ENCODE measurements at regions of chr3 and their contacts with region 1.

Region 1: GRCh38 chr3:78846718-78847117 is 921.1 kb downstream of the ROBO1 start:
- DNase-seq: no peak
- ATAC-seq: no peak
- H3K4me3 ChIP-seq: no peak overlapping the region
- H3K27ac ChIP-seq: peak overlapping the region; percentile 90
- H3K4me1 ChIP-seq: peaks cover 85% of the 10 kb centered on the region
- H3K27me3 ChIP-seq: no peaks in the 10 kb centered on the region
- CTCF ChIP-seq: no peak
- EP300 ChIP-seq: no peak; a peak in 1 of 4 replicates
- POLR2A ChIP-seq: no peak
- RAD21 ChIP-seq: no peak

Region 2: GRCh38 chr3:78562328-78562727 is 284.4 kb before region 1 on chr3:
- CTCF ChIA-PET with region 1: no interaction called
- POLR2A ChIA-PET with region 1: no interaction called
- in situ Hi-C with region 1: no loop called
- intact Hi-C with region 1: no loop called
- DNase-seq: no peak
- ATAC-seq: no peak
- H3K4me3 ChIP-seq: no peak overlapping the region
- H3K27ac ChIP-seq: no peak overlapping the region
- H3K4me1 ChIP-seq: no peaks in the 10 kb centered on the region
- H3K27me3 ChIP-seq: no peaks in the 10 kb centered on the region
- CTCF ChIP-seq: no peak
- EP300 ChIP-seq: no peak
- POLR2A ChIP-seq: no peak
- RAD21 ChIP-seq: no peak

Region 3: DNA sequence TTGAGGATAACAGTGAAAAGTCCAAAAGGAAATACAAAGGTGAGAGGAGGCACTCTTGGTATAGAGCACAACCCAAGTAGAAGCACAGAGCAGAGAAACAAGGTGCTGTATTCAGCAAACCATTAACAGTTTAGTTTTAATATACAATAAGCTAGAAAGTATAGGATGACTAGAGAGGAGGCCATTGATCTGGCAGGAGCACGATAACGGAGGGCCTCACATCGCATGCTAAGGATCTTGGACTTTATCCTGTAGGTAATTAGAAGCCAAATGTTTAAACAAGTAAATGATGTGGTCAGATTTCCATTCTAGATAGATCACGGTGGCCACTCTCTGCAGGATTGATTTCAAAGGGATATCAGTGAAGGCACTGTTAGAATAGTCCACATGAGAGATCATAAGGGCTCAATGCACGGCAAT is 13.9 kb before region 1 on chr3:
- CTCF ChIA-PET with region 1: no interaction called
- POLR2A ChIA-PET with region 1: interaction called, 8 read pairs
- in situ Hi-C with region 1: no loop called
- intact Hi-C with region 1: loop called (anchors 2 kb)
- DNase-seq: peak; percentile 96
- ATAC-seq: peak; percentile 99
- H3K4me3 ChIP-seq: peak overlapping the region in 1 of 3 experiments; percentile 33; a peak in 2 of 6 replicates
- H3K27ac ChIP-seq: peak overlapping the region; percentile 95
- H3K4me1 ChIP-seq: peaks cover 54% of the 10 kb centered on the region
- H3K27me3 ChIP-seq: no peaks in the 10 kb centered on the region
- CTCF ChIP-seq: no peak
- EP300 ChIP-seq: peak; percentile 69 to 93
- POLR2A ChIP-seq: peak; percentile 27 to 34; a peak in 1 of 4 replicates
- RAD21 ChIP-seq: no peak; the same call in 1 of the 2 replicates

Region 4: GRCh38 chr3:78879295-78879860 is 32.7 kb after region 1 on chr3:
- CTCF ChIA-PET with region 1: no interaction called
- POLR2A ChIA-PET with region 1: no interaction called
- in situ Hi-C with region 1: no loop called
- intact Hi-C with region 1: loop called (anchors 2 kb)
- DNase-seq: no peak
- ATAC-seq: peak; percentile 35
- H3K4me3 ChIP-seq: no peak overlapping the region
- H3K27ac ChIP-seq: peak overlapping the region; percentile 50
- H3K4me1 ChIP-seq: peaks cover 63% of the 10 kb centered on the region
- H3K27me3 ChIP-seq: no peaks in the 10 kb centered on the region
- CTCF ChIP-seq: no peak
- EP300 ChIP-seq: no peak
- POLR2A ChIP-seq: no peak
- RAD21 ChIP-seq: no peak

Region 5: DNA sequence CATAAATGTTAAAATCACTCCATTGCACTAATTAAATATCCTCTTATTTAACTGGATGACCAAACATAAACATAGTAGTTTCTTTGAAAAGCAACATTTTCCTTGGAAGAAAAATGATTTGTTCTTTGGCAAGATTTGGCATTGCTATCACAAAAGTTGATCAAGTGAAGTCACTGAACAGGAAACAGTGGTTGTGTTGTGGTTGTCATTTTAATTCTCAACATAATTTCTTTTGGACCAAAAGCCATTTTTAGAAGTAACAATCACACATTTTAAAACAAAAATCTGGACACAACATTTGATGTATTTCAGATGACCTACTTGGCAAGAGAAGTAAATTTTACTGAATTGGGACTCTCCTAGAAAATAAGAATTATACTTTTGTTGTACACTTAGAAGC is 48.8 kb after region 1 on chr3:
- CTCF ChIA-PET with region 1: no interaction called
- POLR2A ChIA-PET with region 1: no interaction called
- in situ Hi-C with region 1: no loop called
- intact Hi-C with region 1: no loop called
- DNase-seq: no peak
- ATAC-seq: no peak
- H3K4me3 ChIP-seq: no peak overlapping the region
- H3K27ac ChIP-seq: no peak overlapping the region
- H3K4me1 ChIP-seq: 0 out of 2 replicates have a peak, but pooled peaks cover 5% of the 10 kb centered on the region
- H3K27me3 ChIP-seq: no peaks in the 10 kb centered on the region
- CTCF ChIP-seq: no peak
- EP300 ChIP-seq: no peak
- POLR2A ChIP-seq: no peak
- RAD21 ChIP-seq: no peak

Region 6: GRCh38 chr3:78988324-78988723 is 141.6 kb after region 1 on chr3:
- CTCF ChIA-PET with region 1: no interaction called
- POLR2A ChIA-PET with region 1: no interaction called
- in situ Hi-C with region 1: no loop called
- intact Hi-C with region 1: loop called (anchors 5 kb)
- DNase-seq: peak; percentile 59
- ATAC-seq: peak; percentile 83
- H3K4me3 ChIP-seq: no peak overlapping the region; a peak in 1 of 6 replicates
- H3K27ac ChIP-seq: peak overlapping the region; percentile 44
- H3K4me1 ChIP-seq: peaks cover 67% of the 10 kb centered on the region
- H3K27me3 ChIP-seq: no peaks in the 10 kb centered on the region
- CTCF ChIP-seq: peak; percentile 68
- EP300 ChIP-seq: peak in 1 of 2 experiments; percentile 74; a peak in 2 of 4 replicates
- POLR2A ChIP-seq: no peak
- RAD21 ChIP-seq: peak; percentile 39; the same call in 1 of the 2 replicates

Measured in HepG2 (cell line).